Naive thymus-derived CD4-positive, alpha-beta T cell (primary cell): ENCODE measurements at regions of chr3 and their contacts with region 1.

Region 1: DNA sequence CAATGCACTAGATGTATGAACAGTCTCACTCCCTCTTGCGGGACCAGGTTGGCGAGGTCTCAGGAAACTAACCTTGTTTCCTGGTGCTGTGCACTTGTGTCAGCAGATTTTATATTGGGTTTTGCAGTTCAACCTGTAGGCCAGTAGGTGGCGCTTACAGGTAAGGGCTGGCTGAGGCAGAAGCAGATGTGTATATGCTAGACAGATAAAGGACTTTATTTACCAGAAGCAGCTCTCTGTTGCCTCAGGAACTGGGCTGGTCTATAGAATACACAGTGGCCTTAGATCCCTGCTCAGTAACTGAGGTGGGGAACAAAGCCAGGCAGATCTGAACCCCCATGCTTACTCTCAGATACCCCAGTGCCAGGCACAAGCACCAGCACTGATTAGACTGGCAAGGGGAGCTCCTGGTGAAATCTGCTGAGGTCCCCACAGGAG is 296.8 kb downstream of the DOCK3 start:
- DNase-seq: peak in 8 of 9 donors; percentile 37 to 83 (median 78)
- ATAC-seq: peak; percentile 99
- H3K4me3 ChIP-seq: no peak overlapping the region
- H3K4me3 Mint-ChIP-seq: peak overlapping the region in 2 of 10 donors; percentile 15 to 45
- H3K27ac ChIP-seq: no peak overlapping the region
- H3K27ac Mint-ChIP-seq: peak overlapping the region in 7 of 9 donors; percentile 12 to 77 (median 67)
- H3K4me1 ChIP-seq: peaks cover 9 to 14% of the 10 kb centered on the region in 2 donors
- H3K4me1 Mint-ChIP-seq: peaks cover 0 to 21% (median 13%) of the 10 kb centered on the region in 7 donors
- H3K27me3 ChIP-seq: no peaks in the 10 kb centered on the region
- H3K27me3 Mint-ChIP-seq: peaks cover 0 to 3% (median 0%) of the 10 kb centered on the region in 5 donors

Region 2: GRCh38 chr3:50924638-50925037 is 46.9 kb before region 1 on chr3:
- CTCF ChIA-PET with region 1: no interaction called
- POLR2A ChIA-PET with region 1: no interaction called
- intact Hi-C with region 1: no loop called
- DNase-seq: no peak
- ATAC-seq: no peak
- H3K4me3 ChIP-seq: no peak overlapping the region
- H3K4me3 Mint-ChIP-seq: no peak overlapping the region
- H3K27ac ChIP-seq: no peak overlapping the region
- H3K27ac Mint-ChIP-seq: no peak overlapping the region
- H3K4me1 ChIP-seq: peaks cover 0 to 8% of the 10 kb centered on the region in 2 donors
- H3K4me1 Mint-ChIP-seq: peaks cover 4 to 16% (median 10%) of the 10 kb centered on the region in 7 donors
- H3K27me3 ChIP-seq: no peaks in the 10 kb centered on the region
- H3K27me3 Mint-ChIP-seq: peaks cover 2 to 17% (median 7%) of the 10 kb centered on the region in 5 donors

Region 3: DNA sequence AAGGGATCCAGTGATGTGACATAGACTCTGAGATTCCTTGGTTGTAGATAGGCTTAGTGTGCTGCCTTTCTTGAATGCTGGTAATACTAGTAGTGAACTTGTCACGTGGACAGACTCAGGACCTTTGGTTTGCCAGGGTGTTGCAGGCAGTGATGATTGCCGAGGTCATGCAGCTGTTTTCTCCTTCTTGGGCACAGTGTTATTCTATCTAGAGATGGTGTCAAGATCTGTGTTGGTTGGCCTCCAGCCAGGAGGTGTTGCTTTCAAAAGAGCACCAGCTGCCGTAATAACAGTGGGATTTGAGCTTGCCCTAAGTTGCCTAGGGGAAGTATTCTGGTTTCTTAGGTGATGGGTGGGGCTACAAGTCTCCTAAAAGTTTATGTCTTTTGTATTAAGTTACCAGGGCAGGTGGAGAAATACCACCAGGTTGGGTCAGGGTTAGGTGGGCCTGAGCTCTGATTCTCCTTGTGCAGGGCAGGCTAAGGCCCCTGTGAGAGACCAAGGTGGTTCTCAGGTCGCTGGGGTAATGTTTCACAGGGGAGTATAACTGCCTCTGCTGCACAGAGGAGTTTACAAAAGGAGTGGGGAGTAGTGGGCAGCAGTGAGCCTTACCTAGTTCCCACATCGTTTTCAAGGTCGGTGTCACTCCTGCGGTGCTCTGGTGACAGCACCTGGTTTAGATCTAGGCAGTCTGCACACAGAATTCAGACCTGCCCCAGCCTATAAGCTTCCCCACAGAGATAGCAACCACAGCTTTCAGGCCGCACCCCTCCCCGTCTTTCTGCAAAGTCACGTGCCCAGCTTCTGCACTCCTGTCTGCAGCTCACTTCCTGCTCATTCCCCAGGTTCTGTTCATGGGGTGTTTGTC is 53.5 kb after region 1 on chr3:
- CTCF ChIA-PET with region 1: interaction called, 7 read pairs
- POLR2A ChIA-PET with region 1: interaction called, 7 read pairs
- intact Hi-C with region 1: loop called in 1 of 2 experiments (anchors 2 kb)
- DNase-seq: peak; percentile 34 to 88 (median 81)
- ATAC-seq: peak; percentile 96
- H3K4me3 ChIP-seq: peak overlapping the region; percentile 55
- H3K4me3 Mint-ChIP-seq: peak overlapping the region; percentile 66 to 89 (median 78)
- H3K27ac ChIP-seq: peak overlapping the region; percentile 70
- H3K27ac Mint-ChIP-seq: peak overlapping the region; percentile 81 to 98 (median 96)
- H3K4me1 ChIP-seq: peaks cover 36 to 41% of the 10 kb centered on the region in 2 donors
- H3K4me1 Mint-ChIP-seq: peaks cover 27 to 72% (median 69%) of the 10 kb centered on the region in 7 donors
- H3K27me3 ChIP-seq: no peaks in the 10 kb centered on the region
- H3K27me3 Mint-ChIP-seq: peaks cover 0 to 8% (median 0%) of the 10 kb centered on the region in 5 donors

Region 4: DNA sequence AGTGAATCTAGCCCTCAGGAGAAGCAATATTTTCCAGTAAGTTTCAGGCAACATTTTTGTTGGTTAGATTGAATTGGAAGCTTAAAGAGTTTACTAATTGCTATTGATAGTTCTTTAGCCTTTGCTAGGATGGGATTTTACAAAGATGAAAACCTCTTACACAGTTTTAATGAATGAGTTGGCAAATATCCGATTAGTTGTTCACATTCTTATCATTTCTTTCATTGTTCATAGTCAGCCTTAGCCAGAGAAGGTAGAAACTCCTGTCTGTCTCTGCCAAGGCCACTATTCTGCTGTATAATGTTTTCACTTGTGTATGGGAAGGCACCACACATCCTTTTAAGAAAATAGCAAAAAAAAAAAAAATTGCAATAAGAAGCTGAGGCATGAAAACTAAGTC is 191.5 kb after region 1 on chr3:
- CTCF ChIA-PET with region 1: no interaction called
- POLR2A ChIA-PET with region 1: no interaction called
- intact Hi-C with region 1: loop called in 1 of 2 experiments (anchors 10 kb)
- DNase-seq: no peak
- ATAC-seq: no peak
- H3K4me3 ChIP-seq: no peak overlapping the region
- H3K4me3 Mint-ChIP-seq: no peak overlapping the region
- H3K27ac ChIP-seq: no peak overlapping the region
- H3K27ac Mint-ChIP-seq: no peak overlapping the region
- H3K4me1 ChIP-seq: no peaks in the 10 kb centered on the region
- H3K4me1 Mint-ChIP-seq: peaks cover 0 to 1% (median 0%) of the 10 kb centered on the region in 7 donors
- H3K27me3 ChIP-seq: no peaks in the 10 kb centered on the region
- H3K27me3 Mint-ChIP-seq: peaks cover 0 to 1% (median 0%) of the 10 kb centered on the region in 5 donors

Region 5: GRCh38 chr3:51275111-51275805 is 303.8 kb after region 1 on chr3:
- CTCF ChIA-PET with region 1: interaction called, 16 read pairs
- POLR2A ChIA-PET with region 1: no interaction called
- intact Hi-C with region 1: loop called in 1 of 2 experiments (anchors 2 kb)
- DNase-seq: no peak
- ATAC-seq: no peak
- H3K4me3 ChIP-seq: no peak overlapping the region
- H3K4me3 Mint-ChIP-seq: peak overlapping the region in 3 of 10 donors; percentile 35 to 61 (median 50)
- H3K27ac ChIP-seq: peak overlapping the region; percentile 6
- H3K27ac Mint-ChIP-seq: peak overlapping the region in 8 of 9 donors; percentile 19 to 87 (median 74)
- H3K4me1 ChIP-seq: peaks cover 6 to 27% of the 10 kb centered on the region in 2 donors
- H3K4me1 Mint-ChIP-seq: peaks cover 10 to 53% (median 40%) of the 10 kb centered on the region in 7 donors
- H3K27me3 ChIP-seq: no peaks in the 10 kb centered on the region
- H3K27me3 Mint-ChIP-seq: no peaks in the 10 kb centered on the region

Region 6: DNA sequence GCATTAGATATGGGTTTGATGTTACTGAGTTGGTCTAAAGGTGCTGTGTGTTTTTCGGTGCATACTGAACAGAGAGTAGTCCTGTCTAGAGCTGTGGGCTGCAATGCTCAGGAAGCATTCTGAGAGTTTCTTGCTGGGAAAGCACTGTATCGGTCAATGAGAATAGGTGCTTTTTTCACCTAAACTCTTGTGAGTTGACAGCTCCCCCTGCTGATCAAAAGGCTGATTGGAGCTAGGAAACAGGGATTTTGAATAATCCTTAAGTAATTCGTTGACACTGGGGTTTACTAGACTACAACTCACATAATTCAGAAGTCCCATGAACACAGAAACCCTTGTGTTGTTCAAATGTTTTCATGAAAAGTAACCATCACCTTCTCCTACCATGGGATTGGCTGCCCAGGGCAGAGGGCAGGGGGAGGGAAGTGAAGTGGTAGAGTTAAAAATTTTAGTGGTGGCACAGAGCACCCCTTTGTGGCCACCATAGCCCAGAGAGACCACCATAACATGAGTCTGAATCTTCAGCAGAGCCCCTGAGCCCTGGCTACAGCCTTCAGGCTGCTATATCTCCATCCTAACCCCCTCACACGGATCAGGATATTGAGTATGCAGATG is 400.5 kb after region 1 on chr3:
- CTCF ChIA-PET with region 1: interaction called, 26 read pairs
- POLR2A ChIA-PET with region 1: no interaction called
- intact Hi-C with region 1: loop called in 1 of 2 experiments (anchors 1 kb)
- DNase-seq: peak in 8 of 9 donors; percentile 22 to 66 (median 49)
- ATAC-seq: peak; percentile 50
- H3K4me3 ChIP-seq: no peak overlapping the region
- H3K4me3 Mint-ChIP-seq: no peak overlapping the region
- H3K27ac ChIP-seq: no peak overlapping the region
- H3K27ac Mint-ChIP-seq: no peak overlapping the region
- H3K4me1 ChIP-seq: no peaks in the 10 kb centered on the region
- H3K4me1 Mint-ChIP-seq: peaks cover 0 to 7% (median 5%) of the 10 kb centered on the region in 7 donors
- H3K27me3 ChIP-seq: no peaks in the 10 kb centered on the region
- H3K27me3 Mint-ChIP-seq: peaks cover 0 to 4% (median 3%) of the 10 kb centered on the region in 5 donors